Activated B cell treated with CpG ODN at 0.5 μM for 24 hours (primary cell): ENCODE measurements at regions of chr19 and their contacts with region 1.

Region 1: DNA sequence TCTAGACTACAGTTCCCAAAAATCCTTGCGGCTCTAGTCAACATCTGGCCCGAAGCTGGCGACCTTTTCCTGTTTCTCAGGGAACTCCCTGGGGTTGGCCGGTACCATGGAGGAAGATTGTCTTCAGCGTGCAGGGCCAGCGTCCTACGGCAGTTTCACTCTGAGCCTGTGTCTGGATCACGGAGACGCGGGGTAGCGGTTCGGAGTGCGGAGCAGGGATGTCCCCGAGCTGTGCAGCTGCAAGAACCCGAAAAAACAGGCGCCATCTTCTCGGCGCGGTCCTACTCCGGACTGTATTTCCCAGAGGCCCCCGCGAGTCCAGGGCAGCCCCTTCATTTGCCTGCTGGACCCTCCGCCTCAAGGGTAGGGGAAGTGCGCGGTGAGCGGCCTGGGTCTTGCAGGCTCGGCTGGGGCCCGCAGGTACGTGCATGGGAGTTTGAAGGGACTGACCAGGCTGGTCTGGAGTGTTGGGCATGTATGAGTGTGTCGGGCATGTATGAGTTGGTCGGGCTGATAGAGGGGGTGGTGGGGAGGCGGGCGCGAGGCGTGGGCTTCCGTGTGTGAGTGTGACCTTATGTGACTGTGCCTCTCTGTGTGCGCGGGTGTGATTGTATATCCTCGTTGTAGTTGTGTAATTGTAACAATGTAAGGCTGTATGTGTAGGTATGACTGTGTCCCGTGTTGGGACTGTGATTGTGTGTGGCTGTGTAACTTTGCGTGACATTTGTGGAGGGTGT is at the start of gene ZNF383:
- DNase-seq: peak; percentile 81
- ATAC-seq: peak; percentile 89
- H3K4me3 Mint-ChIP-seq: peak within 1 kb of the TSS; percentile 98
- H3K27ac Mint-ChIP-seq: peak within 1 kb of the TSS; percentile 99
- H3K4me1 Mint-ChIP-seq: peaks cover 26% of the 10 kb centered on the region
- H3K27me3 Mint-ChIP-seq: no peaks in the 10 kb centered on the region
- CTCF ChIP-seq: no peak
- total RNA-seq, gene ZNF383: 19.9 and 25.5 TPM in 2 replicates

Region 2: DNA sequence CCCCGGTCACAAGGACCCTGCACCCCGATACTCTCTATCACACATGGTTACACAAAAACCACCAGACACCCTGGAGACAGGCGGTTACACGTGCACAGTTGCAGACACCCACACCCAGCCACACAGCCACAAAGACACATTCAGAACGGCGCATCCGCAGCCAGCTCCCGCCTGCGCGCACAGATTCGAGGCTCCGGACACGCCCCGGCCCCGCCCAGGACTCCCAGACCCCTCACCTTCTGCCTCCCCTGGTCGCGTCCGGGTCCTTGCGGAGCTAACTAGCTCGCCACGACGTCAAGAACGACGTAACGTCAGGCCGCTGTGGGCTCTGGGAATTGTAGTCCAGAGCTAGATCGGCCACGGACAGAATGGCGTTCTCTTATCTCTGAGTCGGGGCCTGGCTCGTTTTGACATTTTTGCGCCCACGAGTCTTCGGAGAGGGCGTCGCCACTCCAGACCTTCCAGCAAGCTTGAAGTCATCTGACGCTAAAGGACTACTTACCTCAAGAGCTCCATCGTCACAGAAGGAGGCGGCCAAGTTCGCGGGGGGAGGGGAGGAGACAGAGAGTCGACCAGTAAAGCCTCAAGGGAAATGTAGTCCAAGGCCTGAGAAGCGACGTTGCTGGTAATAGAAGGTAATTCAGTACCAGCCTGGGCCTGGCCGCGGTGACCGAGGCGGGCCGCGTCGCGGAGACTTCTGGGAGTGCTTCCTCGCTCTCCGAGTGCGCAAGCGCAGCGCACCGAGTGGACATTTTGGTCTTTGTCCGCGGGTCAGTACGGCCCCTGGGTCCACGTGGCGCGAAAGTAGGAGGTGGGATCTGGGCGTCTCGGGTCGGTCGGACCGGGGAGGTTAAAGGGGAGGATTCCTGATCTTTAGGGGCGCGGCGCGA is 1003.4 kb before region 1 on chr19 and contains the starts of genes ZNF146 and ZNF565:
- CTCF ChIA-PET with region 1: no interaction called
- POLR2A ChIA-PET with region 1: interaction called, 8 read pairs
- intact Hi-C with region 1: loop called (anchors 10 kb)
- DNase-seq: peak; percentile 90
- ATAC-seq: peak; percentile 90
- H3K4me3 Mint-ChIP-seq: no peak within 1 kb of the TSS
- H3K27ac Mint-ChIP-seq: no peak within 1 kb of the TSS
- H3K4me1 Mint-ChIP-seq: peaks cover 29% of the 10 kb centered on the region
- H3K27me3 Mint-ChIP-seq: no peaks in the 10 kb centered on the region
- CTCF ChIP-seq: no peak
- total RNA-seq, gene ZNF146: 57.8 and 63.2 TPM in 2 replicates
- total RNA-seq, gene ZNF565: 2.3 and 3.2 TPM in 2 replicates

Region 3: DNA sequence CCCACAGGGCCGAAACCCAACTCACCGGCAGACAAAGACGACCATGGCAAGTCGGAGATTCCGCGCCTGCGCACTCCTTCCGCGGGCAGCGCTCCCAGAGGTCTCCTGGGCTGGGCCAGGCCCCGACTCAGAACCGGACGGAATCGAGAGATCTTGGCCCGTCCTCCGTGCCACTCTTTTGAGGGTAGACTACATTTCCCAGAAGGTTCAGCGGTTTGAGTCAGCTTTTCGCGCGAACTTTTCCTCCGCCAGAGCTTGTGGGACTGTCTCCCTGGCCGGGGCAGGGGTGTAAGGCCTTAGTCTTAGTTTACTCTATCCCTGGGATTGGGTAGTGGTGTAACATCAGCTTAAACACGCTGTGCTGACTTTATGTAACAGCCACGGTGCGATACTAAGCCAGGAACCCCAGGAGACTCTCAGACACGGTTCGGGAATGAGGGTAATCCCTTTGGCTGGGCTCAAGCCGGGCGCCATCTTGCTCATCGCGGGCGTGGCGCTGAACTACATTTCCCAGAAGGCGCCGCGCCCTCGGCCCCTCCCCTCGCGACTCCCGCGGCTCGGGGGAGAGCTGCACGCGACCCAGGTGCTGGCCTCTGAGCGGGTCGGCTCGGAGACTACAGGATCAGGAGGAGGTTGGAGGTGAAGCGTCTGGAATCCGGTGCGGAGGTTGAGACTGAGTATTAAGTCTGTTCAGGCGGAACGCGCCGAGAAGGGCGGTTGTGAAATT is 689.7 kb before region 1 on chr19 and contains the start of gene ZNF260:
- CTCF ChIA-PET with region 1: no interaction called
- POLR2A ChIA-PET with region 1: interaction called, 15 read pairs
- intact Hi-C with region 1: loop called (anchors 5 kb)
- DNase-seq: peak; percentile 94
- ATAC-seq: peak; percentile 89
- H3K4me3 Mint-ChIP-seq: peak within 1 kb of the TSS; percentile 99
- H3K27ac Mint-ChIP-seq: peak within 1 kb of the TSS; percentile 99
- H3K4me1 Mint-ChIP-seq: peaks cover 27% of the 10 kb centered on the region
- H3K27me3 Mint-ChIP-seq: no peaks in the 10 kb centered on the region
- CTCF ChIP-seq: no peak
- total RNA-seq, gene ZNF260: 9.8 and 13.6 TPM in 2 replicates

Region 4: GRCh38 chr19:36772311-36773222 is 445.5 kb before region 1 on chr19 and contains the start of gene ZNF850:
- CTCF ChIA-PET with region 1: no interaction called
- POLR2A ChIA-PET with region 1: no interaction called
- intact Hi-C with region 1: loop called (anchors 2 kb)
- DNase-seq: peak; percentile 89
- ATAC-seq: peak; percentile 92
- H3K4me3 Mint-ChIP-seq: peak within 1 kb of the TSS; percentile 92
- H3K27ac Mint-ChIP-seq: peak within 1 kb of the TSS; percentile 85
- H3K4me1 Mint-ChIP-seq: peaks cover 24% of the 10 kb centered on the region
- H3K27me3 Mint-ChIP-seq: no peaks in the 10 kb centered on the region
- CTCF ChIP-seq: no peak
- total RNA-seq, gene ZNF850: 5.8 and 7.9 TPM in 2 replicates

Region 5: GRCh38 chr19:36837906-36838783 is 379.9 kb before region 1 on chr19 and contains the start of gene ZNF790:
- CTCF ChIA-PET with region 1: no interaction called
- POLR2A ChIA-PET with region 1: interaction called, 4 read pairs
- intact Hi-C with region 1: loop called (anchors 5 kb)
- DNase-seq: peak; percentile 76
- ATAC-seq: peak; percentile 94
- H3K4me3 Mint-ChIP-seq: no peak within 1 kb of the TSS
- H3K27ac Mint-ChIP-seq: no peak within 1 kb of the TSS
- H3K4me1 Mint-ChIP-seq: peaks cover 2% of the 10 kb centered on the region
- H3K27me3 Mint-ChIP-seq: no peaks in the 10 kb centered on the region
- CTCF ChIP-seq: no peak
- total RNA-seq, gene ZNF790: 10.3 and 11.5 TPM in 2 replicates

Region 6: GRCh38 chr19:37506387-37507166 is 288.6 kb after region 1 on chr19 and contains the start of gene ZNF793:
- CTCF ChIA-PET with region 1: no interaction called
- POLR2A ChIA-PET with region 1: interaction called, 10 read pairs
- intact Hi-C with region 1: loop called (anchors 5 kb)
- DNase-seq: peak; percentile 70
- ATAC-seq: peak; percentile 87
- H3K4me3 Mint-ChIP-seq: no peak within 1 kb of the TSS
- H3K27ac Mint-ChIP-seq: no peak within 1 kb of the TSS
- H3K4me1 Mint-ChIP-seq: peaks cover 2% of the 10 kb centered on the region
- H3K27me3 Mint-ChIP-seq: no peaks in the 10 kb centered on the region
- CTCF ChIP-seq: no peak
- total RNA-seq, gene ZNF793: 8.4 and 8.7 TPM in 2 replicates

Region 7: DNA sequence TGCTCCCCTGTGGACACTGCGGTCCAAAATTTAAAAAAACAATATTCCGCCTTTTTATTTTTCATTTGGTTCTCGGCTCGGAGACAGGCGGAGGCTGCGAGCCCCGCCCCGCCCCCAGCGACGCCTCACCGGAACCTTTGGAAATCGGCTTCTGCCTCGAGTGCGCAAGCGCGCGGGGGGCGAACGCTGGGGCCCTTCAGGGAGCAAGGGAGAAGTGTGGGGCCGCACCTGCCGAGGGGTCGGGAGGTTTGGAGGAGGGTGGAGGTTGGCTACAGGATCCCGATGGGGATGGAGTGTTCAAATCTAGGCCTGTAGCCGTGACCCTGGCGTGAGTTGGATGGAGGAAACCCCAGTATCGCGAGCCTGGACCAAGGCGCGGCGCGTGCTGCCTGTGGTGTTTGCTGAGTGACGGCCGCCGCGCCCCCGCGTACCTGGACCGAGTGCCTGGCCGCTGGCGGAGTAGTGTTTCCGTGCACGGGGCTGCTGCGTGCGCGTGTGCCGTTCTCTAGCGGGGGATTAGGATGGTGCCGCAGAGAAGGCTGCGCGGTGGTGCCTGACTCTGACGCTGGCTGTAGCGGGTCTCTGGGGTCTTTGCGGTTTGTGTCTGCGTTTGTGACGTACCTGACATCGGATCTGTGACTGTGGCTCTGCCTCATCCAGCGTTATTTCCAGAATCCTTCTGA is 437.8 kb after region 1 on chr19:
- CTCF ChIA-PET with region 1: no interaction called
- POLR2A ChIA-PET with region 1: no interaction called
- intact Hi-C with region 1: loop called (anchors 5 kb)
- DNase-seq: peak; percentile 80
- ATAC-seq: peak; percentile 67
- H3K4me3 Mint-ChIP-seq: peak overlapping the region; percentile 95
- H3K27ac Mint-ChIP-seq: peak overlapping the region; percentile 95
- H3K4me1 Mint-ChIP-seq: peaks cover 28% of the 10 kb centered on the region
- H3K27me3 Mint-ChIP-seq: no peaks in the 10 kb centered on the region
- CTCF ChIP-seq: no peak

Region 8: DNA sequence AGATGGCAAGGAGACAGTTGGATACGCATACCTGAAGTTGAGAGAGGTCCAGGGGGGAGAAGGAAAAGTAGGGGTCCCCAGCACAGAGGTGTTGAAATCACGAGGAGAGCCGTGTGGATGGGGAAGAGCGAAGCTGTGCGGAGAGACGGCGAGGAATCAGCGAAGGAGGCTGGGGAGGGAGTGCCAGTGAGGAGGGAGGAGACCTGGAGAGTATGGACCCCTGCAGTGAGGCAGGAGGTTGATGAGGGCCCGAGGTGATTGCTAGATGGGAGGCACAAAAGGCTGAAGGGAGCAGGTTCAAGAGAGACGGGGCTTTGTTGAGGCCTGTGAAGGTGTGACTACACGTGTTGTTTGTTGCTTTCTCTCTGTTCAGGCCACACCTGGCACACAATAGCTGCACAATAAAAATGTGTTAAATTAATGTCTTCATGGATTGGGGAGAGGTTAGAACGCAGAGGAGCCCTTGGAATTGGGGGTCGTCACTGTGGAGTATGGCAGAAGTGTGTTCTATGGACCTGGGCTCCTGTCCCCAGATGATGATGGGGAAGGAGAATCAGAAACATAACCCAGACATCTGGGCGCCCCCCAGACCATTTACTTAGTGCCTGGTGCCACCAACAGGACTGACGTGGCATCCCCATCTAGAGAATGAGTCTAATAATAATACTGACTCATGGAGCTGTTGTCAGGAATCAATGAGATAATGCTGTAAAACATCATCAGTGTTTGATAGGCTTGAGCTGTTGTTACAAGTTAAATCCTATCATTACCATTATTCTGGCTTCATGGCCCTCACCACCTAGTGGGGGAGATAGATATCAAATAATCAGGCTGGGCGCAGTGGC is 826.5 kb after region 1 on chr19:
- CTCF ChIA-PET with region 1: no interaction called
- POLR2A ChIA-PET with region 1: no interaction called
- intact Hi-C with region 1: no loop called
- DNase-seq: no peak
- ATAC-seq: no peak
- H3K4me3 Mint-ChIP-seq: no peak overlapping the region
- H3K27ac Mint-ChIP-seq: peak overlapping the region; percentile 99
- H3K4me1 Mint-ChIP-seq: peaks cover 70% of the 10 kb centered on the region
- H3K27me3 Mint-ChIP-seq: no peaks in the 10 kb centered on the region
- CTCF ChIP-seq: no peak